ENCODE measurements at regions of chr10 and their contacts with region 1.

Region 1: GRCh38 chr10:119892188-119893065 is at the start of gene SEC23IP:
- DNase-seq: peak; percentile 87 to 98
- H3K4me3 ChIP-seq: peak within 1 kb of the TSS; percentile 69 to 94
- H3K27ac ChIP-seq: peak within 1 kb of the TSS; percentile 81 to 90
- H3K4me1 ChIP-seq: peaks cover 13 to 23% of the 10 kb centered on the region in 2 donors
- H3K27me3 ChIP-seq: no peaks in the 10 kb centered on the region
- CTCF ChIP-seq: no peak
- total RNA-seq, gene SEC23IP: 17.1 TPM

Region 2: GRCh38 chr10:118046395-118047156 is 1845.9 kb before region 1 on chr10 and contains the start of gene RAB11FIP2:
- intact Hi-C with region 1: loop called (anchors 10 kb)
- DNase-seq: peak; percentile 82 to 98
- H3K4me3 ChIP-seq: peak within 1 kb of the TSS; percentile 75 to 96
- H3K27ac ChIP-seq: peak within 1 kb of the TSS; percentile 91 to 98
- H3K4me1 ChIP-seq: peaks cover 2 to 22% of the 10 kb centered on the region in 2 donors
- H3K27me3 ChIP-seq: no peaks in the 10 kb centered on the region
- CTCF ChIP-seq: peak in 1 of 3 experiments; percentile 17
- total RNA-seq, gene RAB11FIP2: 2.8 TPM

Region 3: DNA sequence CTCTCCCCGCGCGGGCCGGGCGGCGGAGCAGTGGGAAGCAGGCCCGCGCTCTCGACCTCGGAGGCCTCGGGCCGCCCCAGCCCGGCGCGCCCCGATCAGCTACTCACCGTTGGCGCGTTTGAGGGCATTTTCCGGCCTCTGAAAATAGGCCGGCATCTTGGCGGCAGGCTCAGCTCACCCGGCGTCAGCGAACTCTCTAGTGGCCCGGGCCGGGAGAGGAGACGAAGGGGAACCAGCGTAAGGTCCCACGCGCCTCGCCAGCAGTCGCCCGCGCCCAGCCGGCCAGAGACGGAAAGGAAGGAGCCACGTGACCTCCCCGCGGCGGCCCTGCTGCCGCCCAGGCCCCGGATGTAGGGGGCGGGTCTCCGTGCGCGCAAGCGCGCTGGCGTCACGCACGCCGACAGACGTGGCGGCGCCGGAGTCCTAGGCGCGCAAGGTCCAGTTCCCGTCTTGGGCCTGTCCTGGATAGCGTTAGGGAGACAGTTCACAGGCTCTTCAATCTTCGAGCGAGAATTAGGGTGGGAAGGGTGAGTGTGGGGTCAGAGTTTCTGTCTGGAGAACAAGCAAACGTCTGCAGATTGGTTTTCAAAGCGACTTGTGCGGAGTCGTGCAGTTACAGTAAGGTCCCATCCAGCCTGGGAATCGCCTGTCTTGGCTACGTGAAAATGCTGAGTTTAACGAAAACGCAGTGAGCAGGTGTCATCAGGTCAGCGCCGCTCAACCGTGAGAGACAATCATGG is 811.7 kb before region 1 on chr10 and contains the start of gene EIF3A:
- intact Hi-C with region 1: loop called (anchors 5 kb)
- DNase-seq: peak; percentile 61 to 95
- H3K4me3 ChIP-seq: peak within 1 kb of the TSS; percentile 88 to 92
- H3K27ac ChIP-seq: peak within 1 kb of the TSS; percentile 96 to 98
- H3K4me1 ChIP-seq: peaks cover 0 to 23% of the 10 kb centered on the region in 2 donors
- H3K27me3 ChIP-seq: no peaks in the 10 kb centered on the region
- CTCF ChIP-seq: no peak
- total RNA-seq, gene EIF3A: 59.4 TPM

Region 4: GRCh38 chr10:119178372-119179119 is 713.9 kb before region 1 on chr10 and contains the start of gene PRDX3:
- intact Hi-C with region 1: loop called (anchors 10 kb)
- DNase-seq: peak; percentile 72 to 95
- H3K4me3 ChIP-seq: peak within 1 kb of the TSS; percentile 66 to 81
- H3K27ac ChIP-seq: peak within 1 kb of the TSS; percentile 72 to 91
- H3K4me1 ChIP-seq: peaks cover 0 to 7% of the 10 kb centered on the region in 2 donors
- H3K27me3 ChIP-seq: no peaks in the 10 kb centered on the region
- CTCF ChIP-seq: peak in 2 of 3 experiments; percentile 13 to 19
- total RNA-seq, gene PRDX3: 34.9 TPM

Region 5: GRCh38 chr10:119872860-119873681 is 19.4 kb before region 1 on chr10:
- intact Hi-C with region 1: loop called (anchors 1 kb)
- DNase-seq: peak; percentile 30 to 91
- H3K4me3 ChIP-seq: peak overlapping the region; percentile 72 to 91
- H3K27ac ChIP-seq: peak overlapping the region; percentile 85 to 90
- H3K4me1 ChIP-seq: peaks cover 0 to 18% of the 10 kb centered on the region in 2 donors
- H3K27me3 ChIP-seq: no peaks in the 10 kb centered on the region
- CTCF ChIP-seq: no peak

Region 6: DNA sequence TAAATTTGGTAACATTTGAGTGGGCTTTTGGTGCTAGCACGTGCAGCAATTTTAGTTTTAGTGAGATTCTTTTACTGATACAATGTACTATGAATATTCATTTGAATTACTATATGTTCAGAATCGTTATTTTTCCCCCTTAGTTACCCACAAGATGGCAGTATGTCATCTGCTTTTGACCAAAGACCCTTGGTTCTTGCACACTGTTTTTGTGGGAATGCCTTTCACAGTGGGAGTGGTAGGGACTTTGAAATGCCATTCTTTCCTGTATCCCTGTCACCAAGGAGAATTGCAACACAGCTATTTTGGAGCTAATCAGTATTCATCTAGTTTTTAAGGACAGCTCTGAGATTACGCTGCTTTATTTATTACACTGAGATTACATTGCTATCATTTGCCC is 40.8 kb after region 1 on chr10:
- intact Hi-C with region 1: no loop called
- DNase-seq: no peak
- H3K4me3 ChIP-seq: no peak overlapping the region
- H3K27ac ChIP-seq: no peak overlapping the region
- H3K4me1 ChIP-seq: no peaks in the 10 kb centered on the region
- H3K27me3 ChIP-seq: no peaks in the 10 kb centered on the region
- CTCF ChIP-seq: no peak

Region 7: GRCh38 chr10:120005207-120006201 is 113.1 kb after region 1 on chr10:
- intact Hi-C with region 1: no loop called
- DNase-seq: no peak
- H3K4me3 ChIP-seq: no peak overlapping the region
- H3K27ac ChIP-seq: no peak overlapping the region
- H3K4me1 ChIP-seq: no peaks in the 10 kb centered on the region
- H3K27me3 ChIP-seq: no peaks in the 10 kb centered on the region
- CTCF ChIP-seq: no peak